Endothelial cell of umbilical vein (primary cell): ENCODE measurements at regions of chr13 and their contacts with region 1.

Region 1: DNA sequence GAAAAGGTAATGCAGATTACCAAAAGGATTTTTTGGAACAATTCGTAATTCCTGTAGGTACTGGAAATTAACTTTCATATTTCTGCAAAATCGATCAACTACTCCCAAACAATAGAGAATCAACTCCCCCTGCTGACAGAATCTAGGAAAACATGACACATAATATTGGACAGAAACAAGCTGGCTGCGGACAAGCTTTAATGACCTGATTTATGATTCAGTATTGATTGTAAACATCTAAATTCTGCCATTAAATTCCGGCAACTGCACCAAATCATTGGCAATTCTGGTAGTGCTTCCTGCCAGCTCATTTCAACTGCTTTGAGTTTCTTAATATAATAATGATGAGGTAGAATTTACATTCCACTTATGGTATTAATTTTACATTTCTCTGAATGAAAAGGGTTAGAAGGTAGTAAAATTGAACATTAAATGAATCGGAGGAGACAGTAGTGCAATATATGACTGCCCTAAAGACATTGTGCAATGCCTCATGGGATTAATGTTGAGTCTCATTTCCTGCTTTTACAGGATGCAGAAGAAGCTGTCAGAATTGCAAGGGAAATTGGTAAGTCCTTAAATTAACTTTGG is 146.5 kb downstream of the PCCA start:
- DNase-seq: peak; percentile 67
- H3K4me3 ChIP-seq: no peak overlapping the region
- H3K27ac ChIP-seq: no peak overlapping the region
- H3K4me1 ChIP-seq: peaks cover 17% of the 10 kb centered on the region
- H3K27me3 ChIP-seq: no peaks in the 10 kb centered on the region
- CTCF ChIP-seq: peak; percentile 25 to 38
- POLR2A ChIP-seq: no peak

Region 2: DNA sequence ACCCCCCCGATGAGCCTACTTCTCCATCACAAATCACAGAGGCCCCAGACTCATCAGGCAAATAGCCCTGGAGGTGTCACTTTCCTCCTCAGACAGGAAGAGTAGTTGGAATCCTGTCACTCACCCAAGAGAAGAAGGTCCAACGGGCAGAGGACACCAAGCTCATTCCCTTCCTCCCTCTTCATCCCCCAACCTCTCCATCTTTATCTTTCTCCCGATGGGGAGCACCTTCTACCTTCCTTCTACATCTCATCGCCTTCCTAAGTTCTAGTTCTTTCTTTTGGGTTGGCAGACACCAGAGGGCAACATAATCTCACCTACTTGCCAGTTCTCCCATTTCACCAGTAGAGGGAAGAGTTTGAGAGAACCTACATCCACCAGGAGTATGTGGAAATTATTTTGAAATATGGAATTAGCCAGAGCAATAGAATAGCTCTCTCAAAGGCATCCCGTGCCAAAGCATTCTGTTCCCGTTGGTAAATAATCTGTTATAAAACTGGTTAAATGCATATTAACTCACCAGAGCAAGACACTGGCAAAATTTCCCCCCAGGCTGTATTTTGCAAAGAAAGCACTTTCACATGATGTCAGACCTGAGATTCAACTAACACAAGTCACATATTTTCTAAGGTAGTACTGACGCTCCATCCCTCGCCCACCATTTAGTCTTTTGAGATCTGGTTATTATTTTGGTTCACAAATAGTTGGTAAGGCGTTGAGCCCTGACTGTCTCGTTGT is 318.9 kb before region 1 on chr13:
- CTCF ChIA-PET with region 1: interaction called, 87 read pairs
- POLR2A ChIA-PET with region 1: no interaction called
- dilution Hi-C with region 1: no loop called
- intact Hi-C with region 1: loop called (anchors 1 kb)
- DNase-seq: peak; percentile 72
- H3K4me3 ChIP-seq: no peak overlapping the region
- H3K27ac ChIP-seq: no peak overlapping the region
- H3K4me1 ChIP-seq: no peaks in the 10 kb centered on the region
- H3K27me3 ChIP-seq: peaks cover 0 to 10% of the 10 kb centered on the region in 2 experiments
- CTCF ChIP-seq: peak; percentile 78 to 83
- POLR2A ChIP-seq: no peak

Region 3: GRCh38 chr13:99980201-99980823 is 255.1 kb before region 1 on chr13:
- CTCF ChIA-PET with region 1: interaction called, 14 read pairs
- POLR2A ChIA-PET with region 1: no interaction called
- dilution Hi-C with region 1: no loop called
- intact Hi-C with region 1: loop called (anchors 5 kb)
- DNase-seq: peak; percentile 47
- H3K4me3 ChIP-seq: peak overlapping the region in 1 of 3 experiments; percentile 34
- H3K27ac ChIP-seq: no peak overlapping the region
- H3K4me1 ChIP-seq: peaks cover 5% of the 10 kb centered on the region
- H3K27me3 ChIP-seq: peaks cover 71 to 92% of the 10 kb centered on the region in 2 experiments
- CTCF ChIP-seq: no peak
- POLR2A ChIP-seq: no peak

Region 4: GRCh38 chr13:100039740-100040139 is 195.7 kb before region 1 on chr13:
- CTCF ChIA-PET with region 1: interaction called, 21 read pairs
- POLR2A ChIA-PET with region 1: no interaction called
- dilution Hi-C with region 1: no loop called
- intact Hi-C with region 1: no loop called
- DNase-seq: no peak
- H3K4me3 ChIP-seq: no peak overlapping the region
- H3K27ac ChIP-seq: no peak overlapping the region
- H3K4me1 ChIP-seq: no peaks in the 10 kb centered on the region
- H3K27me3 ChIP-seq: no peaks in the 10 kb centered on the region
- CTCF ChIP-seq: no peak
- POLR2A ChIP-seq: no peak

Region 5: DNA sequence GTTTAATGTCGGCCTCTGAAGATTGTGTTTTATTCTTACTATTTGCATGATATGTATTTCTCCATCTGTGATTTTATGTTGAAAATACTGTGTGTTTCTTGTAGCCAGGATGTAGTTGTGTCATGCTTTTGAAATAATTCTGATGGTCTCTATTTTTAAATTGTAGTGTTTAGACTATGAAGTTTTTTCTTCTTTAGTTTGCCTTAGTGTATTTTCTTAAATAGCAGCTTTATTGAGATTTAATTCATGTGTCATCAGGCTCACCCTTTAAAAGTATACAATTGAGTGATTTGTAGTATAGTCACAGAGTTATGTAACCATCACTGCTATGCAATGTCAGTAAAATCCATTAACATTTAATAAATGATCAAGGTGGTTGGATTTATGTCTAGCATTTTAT is 72.0 kb before region 1 on chr13:
- CTCF ChIA-PET with region 1: interaction called, 11 read pairs
- POLR2A ChIA-PET with region 1: no interaction called
- dilution Hi-C with region 1: no loop called
- intact Hi-C with region 1: no loop called
- DNase-seq: no peak
- H3K4me3 ChIP-seq: no peak overlapping the region
- H3K27ac ChIP-seq: no peak overlapping the region
- H3K4me1 ChIP-seq: no peaks in the 10 kb centered on the region
- H3K27me3 ChIP-seq: no peaks in the 10 kb centered on the region
- CTCF ChIP-seq: no peak
- POLR2A ChIP-seq: no peak

Region 6: DNA sequence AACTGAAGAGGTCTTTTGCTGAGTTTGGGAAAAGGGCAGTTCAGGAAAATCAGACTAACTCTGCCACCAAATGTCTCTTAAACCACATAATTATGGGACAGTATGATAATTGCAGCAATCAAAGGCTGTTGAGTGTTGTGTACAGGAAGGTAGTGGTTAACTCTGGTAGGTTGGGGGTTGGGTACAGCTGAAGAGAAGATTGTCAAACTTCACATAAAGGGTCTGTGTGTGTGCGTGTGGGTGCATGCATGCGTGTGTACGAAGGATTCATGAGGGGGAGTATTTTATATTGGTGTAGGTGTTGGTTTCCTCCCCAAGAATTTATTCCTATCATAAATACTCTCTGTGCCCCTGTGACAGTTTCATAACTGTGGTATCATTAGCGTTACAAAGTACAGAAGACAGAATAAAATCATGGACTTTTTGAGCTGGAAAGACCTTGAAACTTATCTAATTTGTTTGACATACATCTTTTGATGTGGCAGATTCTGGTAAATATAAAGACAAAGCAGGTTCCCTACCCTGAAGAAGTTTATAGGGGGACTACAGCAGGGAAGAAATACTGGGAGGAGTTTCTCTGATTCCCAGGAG is 52.4 kb before region 1 on chr13:
- CTCF ChIA-PET with region 1: no interaction called
- POLR2A ChIA-PET with region 1: no interaction called
- dilution Hi-C with region 1: no loop called
- intact Hi-C with region 1: no loop called
- DNase-seq: no peak
- H3K4me3 ChIP-seq: no peak overlapping the region
- H3K27ac ChIP-seq: no peak overlapping the region
- H3K4me1 ChIP-seq: no peaks in the 10 kb centered on the region
- H3K27me3 ChIP-seq: no peaks in the 10 kb centered on the region
- CTCF ChIP-seq: no peak
- POLR2A ChIP-seq: no peak